ENCODE measurements at regions of chrX and their contacts with region 1.

Region 1: DNA sequence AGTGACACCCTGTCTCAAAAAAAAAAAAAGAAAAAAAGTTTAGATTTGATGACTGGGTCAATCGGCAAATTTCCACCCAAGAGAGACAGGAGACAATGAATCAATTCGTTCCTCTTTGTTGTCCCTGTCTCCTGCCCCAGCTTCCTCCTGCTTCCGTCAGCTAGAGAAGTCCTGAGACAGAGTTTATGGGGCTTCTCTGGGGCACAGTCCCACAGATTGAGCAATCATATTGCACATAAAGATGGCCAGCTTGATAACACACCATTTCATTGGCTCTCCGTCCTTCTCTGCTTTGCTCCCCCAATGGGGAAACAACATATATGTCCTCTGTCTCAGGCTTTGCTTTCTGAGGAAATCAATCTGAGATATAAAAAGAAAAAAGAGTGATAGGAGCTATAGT is 78.4 kb upstream of the FUNDC1 start:
- DNase-seq: no peak
- ATAC-seq: no peak
- H3K4me3 ChIP-seq: no peak overlapping the region
- H3K27ac ChIP-seq: no peak overlapping the region
- H3K4me1 ChIP-seq: no peaks in the 10 kb centered on the region
- H3K27me3 ChIP-seq: no peaks in the 10 kb centered on the region
- CTCF ChIP-seq: no peak
- POLR2A ChIP-seq: no peak
- RAD21 ChIP-seq: no peak

Region 2: DNA sequence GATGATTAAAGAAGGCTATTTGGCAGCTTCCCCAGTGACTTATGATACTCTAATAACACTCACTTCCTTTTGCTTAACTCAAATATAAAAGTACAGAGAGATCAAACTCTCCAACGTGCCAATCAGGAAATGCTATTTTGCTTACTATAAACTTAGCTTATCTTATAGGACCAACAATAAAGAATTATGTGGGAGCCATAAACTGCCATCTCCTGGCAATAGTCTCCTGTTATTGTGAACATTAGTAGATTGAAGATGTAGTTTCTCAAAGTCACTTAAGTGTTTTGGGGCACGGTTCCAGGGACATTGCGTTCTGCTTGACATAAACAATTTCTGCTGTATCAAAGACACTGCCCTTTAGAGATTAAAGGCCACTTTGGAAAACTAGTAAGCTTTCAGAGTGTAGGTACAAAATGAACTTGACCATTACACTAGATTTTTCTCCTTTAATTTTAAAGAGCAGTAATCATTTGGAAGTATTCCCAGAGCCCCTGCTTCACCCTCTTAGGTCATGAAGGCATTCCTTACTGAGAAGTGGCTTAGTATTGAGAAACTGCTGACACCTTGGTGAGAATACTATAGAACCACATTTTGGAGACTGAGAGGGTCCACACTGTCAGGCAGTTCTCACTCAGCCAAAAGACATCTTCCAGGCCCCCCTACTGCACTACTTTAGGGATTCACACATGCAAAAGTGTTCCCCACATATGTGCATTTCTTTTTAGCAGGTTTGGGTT is 913.1 kb before region 1 on chrX:
- CTCF ChIA-PET with region 1: no interaction called
- POLR2A ChIA-PET with region 1: no interaction called
- RAD21 ChIA-PET with region 1: no interaction called
- intact Hi-C with region 1: no loop called
- DNase-seq: no peak
- ATAC-seq: no peak
- H3K4me3 ChIP-seq: no peak overlapping the region
- H3K27ac ChIP-seq: no peak overlapping the region
- H3K4me1 ChIP-seq: no peaks in the 10 kb centered on the region
- H3K27me3 ChIP-seq: no peaks in the 10 kb centered on the region
- CTCF ChIP-seq: no peak
- POLR2A ChIP-seq: no peak
- RAD21 ChIP-seq: no peak

Region 3: GRCh38 chrX:44568196-44568595 is 52.9 kb before region 1 on chrX:
- CTCF ChIA-PET with region 1: no interaction called
- POLR2A ChIA-PET with region 1: no interaction called
- RAD21 ChIA-PET with region 1: no interaction called
- intact Hi-C with region 1: loop called (anchors 10 kb)
- DNase-seq: no peak
- ATAC-seq: no peak
- H3K4me3 ChIP-seq: no peak overlapping the region
- H3K27ac ChIP-seq: no peak overlapping the region
- H3K4me1 ChIP-seq: peaks cover 0 to 8% of the 10 kb centered on the region in 2 experiments; a peak in 2 of 4 replicates
- H3K27me3 ChIP-seq: no peaks in the 10 kb centered on the region
- CTCF ChIP-seq: no peak
- POLR2A ChIP-seq: no peak
- RAD21 ChIP-seq: no peak